ENCODE measurements at regions of chr9 and their contacts with region 1.

Region 1: DNA sequence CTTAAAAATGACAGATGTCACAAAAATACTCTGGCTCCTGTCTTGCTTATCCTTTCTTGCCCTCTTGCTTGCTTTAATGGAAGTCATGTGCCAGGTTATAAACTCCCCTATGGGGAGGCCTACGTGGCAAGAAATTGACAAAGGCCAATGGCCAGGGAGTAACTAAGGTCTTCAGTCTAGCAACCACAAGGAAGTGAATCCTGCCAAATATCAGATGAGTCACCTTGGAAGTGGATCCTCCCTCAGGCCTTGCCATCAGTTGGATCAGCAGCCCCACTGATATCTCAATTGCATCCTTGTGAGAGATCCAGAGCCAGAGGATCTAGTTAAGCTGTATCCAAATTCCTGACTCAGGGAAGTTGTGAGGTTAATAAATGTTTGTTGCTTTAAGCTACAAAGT is 82.8 kb downstream of the CAAP1 start:
- DNase-seq: peak; percentile 9
- H3K4me3 ChIP-seq: no peak overlapping the region
- H3K27me3 ChIP-seq: no peaks in the 10 kb centered on the region
- CTCF ChIP-seq: no peak

Region 2: GRCh38 chr9:26789959-26790358 is 19.8 kb before region 1 on chr9:
- CTCF ChIA-PET with region 1: no interaction called
- POLR2A ChIA-PET with region 1: interaction called, 11 read pairs
- DNase-seq: no peak
- H3K4me3 ChIP-seq: no peak overlapping the region
- H3K27me3 ChIP-seq: no peaks in the 10 kb centered on the region
- CTCF ChIP-seq: no peak

Region 3: GRCh38 chr9:26995815-26996214 is 186.0 kb after region 1 on chr9:
- CTCF ChIA-PET with region 1: no interaction called
- POLR2A ChIA-PET with region 1: no interaction called
- DNase-seq: no peak
- H3K4me3 ChIP-seq: no peak overlapping the region
- H3K27me3 ChIP-seq: no peaks in the 10 kb centered on the region
- CTCF ChIP-seq: no peak